ENCODE measurements at regions of chr10 and their contacts with region 1.

Region 1: DNA sequence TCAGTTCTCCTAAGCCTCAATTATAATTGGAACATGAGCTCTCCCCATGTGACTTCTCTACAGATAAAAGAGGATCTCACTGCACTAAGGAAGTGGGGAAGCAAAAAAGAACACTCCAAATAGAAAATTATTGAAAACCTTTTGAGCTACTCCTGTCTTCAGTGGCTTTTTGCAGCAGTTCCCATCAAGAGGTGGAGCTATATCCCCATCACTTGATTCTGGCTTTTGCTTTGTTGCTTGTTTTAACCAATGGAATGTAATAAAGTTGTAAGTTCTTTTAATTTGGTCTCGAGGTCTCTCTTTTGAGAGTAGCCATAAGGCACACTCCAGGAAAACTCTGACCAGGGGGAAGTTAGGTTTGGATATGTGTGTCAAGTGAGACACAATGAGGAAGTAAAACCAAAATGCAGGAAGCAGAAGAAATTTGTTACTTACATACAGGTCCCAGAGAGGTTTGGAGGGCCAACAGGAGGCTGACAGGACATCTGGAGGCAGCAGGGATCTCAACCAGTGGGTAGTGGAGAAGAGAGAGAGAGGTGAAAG is 569.4 kb downstream of the HTR7 start:
- DNase-seq: peak; percentile 68
- H3K4me3 ChIP-seq: no peak overlapping the region
- H3K27ac ChIP-seq: no peak overlapping the region
- H3K4me1 ChIP-seq: peaks cover 6% of the 10 kb centered on the region
- H3K27me3 ChIP-seq: peaks cover 0 to 4% of the 10 kb centered on the region in 2 experiments
- CTCF ChIP-seq: peak in 1 of 2 donors; percentile 24
- POLR2A ChIP-seq: no peak

Region 2: GRCh38 chr10:90571481-90572258 is 283.2 kb after region 1 on chr10:
- CTCF ChIA-PET with region 1: interaction called, 11 read pairs
- POLR2A ChIA-PET with region 1: no interaction called
- dilution Hi-C with region 1: no loop called
- intact Hi-C with region 1: no loop called
- DNase-seq: no peak
- H3K4me3 ChIP-seq: no peak overlapping the region
- H3K27ac ChIP-seq: no peak overlapping the region
- H3K4me1 ChIP-seq: no peaks in the 10 kb centered on the region
- H3K27me3 ChIP-seq: no peaks in the 10 kb centered on the region
- CTCF ChIP-seq: no peak
- POLR2A ChIP-seq: no peak

Region 3: DNA sequence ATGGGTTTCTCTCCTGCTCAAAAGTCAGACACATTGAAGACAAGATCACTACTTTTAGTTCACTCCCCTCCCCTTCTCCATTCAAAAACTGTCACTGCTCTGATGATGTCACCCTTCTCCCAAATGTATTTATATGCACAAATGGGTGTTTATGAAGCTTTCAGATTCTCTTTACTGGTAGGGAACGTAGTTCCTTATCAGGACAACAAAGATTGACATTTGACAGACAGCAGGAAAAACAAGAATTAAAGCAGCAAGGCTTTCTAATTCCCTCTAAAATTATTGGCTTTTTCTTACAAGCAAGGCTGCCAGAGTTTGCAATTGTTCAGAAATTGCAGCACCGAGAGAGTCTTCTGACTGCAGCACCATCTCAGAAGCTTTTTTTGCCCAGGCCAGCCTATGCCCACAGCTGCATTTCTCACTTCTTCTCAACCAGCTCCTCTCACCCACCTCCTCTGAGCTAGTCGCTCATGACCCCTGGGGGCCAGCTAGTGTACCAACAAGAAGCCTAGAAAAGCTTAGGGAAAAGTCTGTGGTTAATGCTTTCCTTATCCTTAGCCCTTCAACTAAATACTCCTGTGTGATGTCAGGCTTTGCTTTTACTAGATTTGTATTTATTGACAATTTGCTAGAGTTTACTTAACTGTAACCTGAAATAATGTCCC is 304.3 kb after region 1 on chr10:
- CTCF ChIA-PET with region 1: interaction called, 179 read pairs
- POLR2A ChIA-PET with region 1: no interaction called
- dilution Hi-C with region 1: no loop called
- intact Hi-C with region 1: loop called (anchors 1 kb)
- DNase-seq: peak; percentile 55
- H3K4me3 ChIP-seq: no peak overlapping the region
- H3K27ac ChIP-seq: no peak overlapping the region
- H3K4me1 ChIP-seq: no peaks in the 10 kb centered on the region
- H3K27me3 ChIP-seq: peaks cover 6 to 10% of the 10 kb centered on the region in 2 experiments
- CTCF ChIP-seq: peak; percentile 61 to 72
- POLR2A ChIP-seq: no peak

Region 4: DNA sequence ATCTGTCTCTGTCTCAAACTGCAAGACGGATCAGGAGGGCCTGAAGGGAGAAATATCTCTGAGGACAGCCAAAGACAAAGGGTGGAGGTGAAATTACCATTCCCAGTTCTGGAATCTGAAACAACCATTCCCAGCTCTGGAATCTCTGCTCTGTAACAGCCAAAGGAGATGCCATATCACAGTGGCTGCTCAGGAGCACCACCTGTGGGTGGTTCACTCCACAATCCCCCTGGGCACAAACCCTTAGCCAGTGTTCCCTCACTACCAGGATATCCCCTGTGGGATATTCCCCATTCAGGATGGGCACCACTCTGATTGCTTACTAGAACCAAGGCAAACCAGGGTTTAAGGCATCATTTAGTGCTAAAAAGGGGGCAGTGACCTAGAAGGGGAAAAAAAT is 370.3 kb after region 1 on chr10:
- CTCF ChIA-PET with region 1: interaction called, 19 read pairs
- POLR2A ChIA-PET with region 1: no interaction called
- dilution Hi-C with region 1: no loop called
- intact Hi-C with region 1: loop called (anchors 2 kb)
- DNase-seq: no peak
- H3K4me3 ChIP-seq: no peak overlapping the region
- H3K27ac ChIP-seq: no peak overlapping the region
- H3K4me1 ChIP-seq: no peaks in the 10 kb centered on the region
- H3K27me3 ChIP-seq: no peaks in the 10 kb centered on the region
- CTCF ChIP-seq: peak in 1 of 2 donors; percentile 34
- POLR2A ChIP-seq: no peak

Region 5: DNA sequence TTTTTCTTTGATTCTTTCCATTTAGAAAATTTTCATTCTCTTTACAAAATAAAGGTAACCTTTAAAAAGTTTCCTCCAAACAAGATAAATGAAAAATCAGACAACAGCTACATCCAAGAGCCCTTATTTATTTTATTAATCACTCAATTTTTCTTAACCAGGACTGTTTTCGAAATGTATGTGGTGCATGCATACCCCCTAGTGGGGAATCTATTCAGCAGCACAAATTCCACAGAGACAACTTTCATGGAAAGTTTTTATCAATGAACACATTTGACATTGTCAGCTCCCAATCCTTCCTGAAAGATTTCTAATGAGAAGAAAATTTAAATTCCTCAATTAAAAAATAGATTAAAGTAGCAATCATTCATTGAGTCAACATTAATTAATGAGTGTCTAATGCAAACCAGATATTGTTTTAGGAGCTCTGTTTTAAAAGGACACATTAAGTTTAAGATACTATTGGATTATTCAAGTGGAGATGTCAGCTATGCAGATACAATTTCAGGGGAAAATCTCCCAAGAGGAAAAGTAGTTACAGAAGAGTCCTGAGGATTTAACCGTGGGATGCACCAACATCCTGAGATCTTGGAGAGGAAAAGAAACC is 574.5 kb after region 1 on chr10:
- CTCF ChIA-PET with region 1: interaction called, 6 read pairs
- POLR2A ChIA-PET with region 1: no interaction called
- dilution Hi-C with region 1: no loop called
- intact Hi-C with region 1: loop called (anchors 5 kb)
- DNase-seq: peak; percentile 49
- H3K4me3 ChIP-seq: no peak overlapping the region
- H3K27ac ChIP-seq: no peak overlapping the region
- H3K4me1 ChIP-seq: peaks cover 19% of the 10 kb centered on the region
- H3K27me3 ChIP-seq: peaks cover 24 to 43% of the 10 kb centered on the region in 2 experiments
- CTCF ChIP-seq: peak; percentile 57 to 62
- POLR2A ChIP-seq: no peak

Measured in endothelial cell of umbilical vein (primary cell).